PC-3 (cell line): ENCODE measurements at regions of chr12 and their contacts with region 1.

Region 1: DNA sequence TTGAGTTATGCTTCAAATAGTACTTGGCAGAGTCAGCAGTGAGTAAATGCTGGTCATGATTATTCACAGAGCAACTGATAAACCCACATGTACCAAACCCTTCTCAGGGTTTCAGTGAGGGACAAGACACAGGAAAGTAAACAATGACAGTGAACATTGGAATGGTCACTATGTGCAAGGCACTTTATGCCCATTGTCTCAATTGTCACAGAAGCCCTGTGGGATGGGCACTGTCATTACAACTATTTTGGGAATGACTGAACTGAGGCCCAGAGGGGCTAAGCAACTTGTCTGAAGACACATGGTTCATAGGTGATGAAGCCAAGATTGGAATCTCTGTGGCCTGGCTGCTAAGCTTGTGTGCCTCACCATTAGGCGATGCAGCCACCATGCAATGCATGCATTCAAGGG is 238.5 kb downstream of the RBM19 start:
- DNase-seq: peak; percentile 99
- ATAC-seq: peak; percentile 90
- H3K4me3 ChIP-seq: no peak overlapping the region
- H3K27ac ChIP-seq: peak overlapping the region; percentile 80
- H3K4me1 ChIP-seq: peaks cover 34% of the 10 kb centered on the region
- H3K27me3 ChIP-seq: no peaks in the 10 kb centered on the region
- CTCF ChIP-seq: no peak

Region 2: DNA sequence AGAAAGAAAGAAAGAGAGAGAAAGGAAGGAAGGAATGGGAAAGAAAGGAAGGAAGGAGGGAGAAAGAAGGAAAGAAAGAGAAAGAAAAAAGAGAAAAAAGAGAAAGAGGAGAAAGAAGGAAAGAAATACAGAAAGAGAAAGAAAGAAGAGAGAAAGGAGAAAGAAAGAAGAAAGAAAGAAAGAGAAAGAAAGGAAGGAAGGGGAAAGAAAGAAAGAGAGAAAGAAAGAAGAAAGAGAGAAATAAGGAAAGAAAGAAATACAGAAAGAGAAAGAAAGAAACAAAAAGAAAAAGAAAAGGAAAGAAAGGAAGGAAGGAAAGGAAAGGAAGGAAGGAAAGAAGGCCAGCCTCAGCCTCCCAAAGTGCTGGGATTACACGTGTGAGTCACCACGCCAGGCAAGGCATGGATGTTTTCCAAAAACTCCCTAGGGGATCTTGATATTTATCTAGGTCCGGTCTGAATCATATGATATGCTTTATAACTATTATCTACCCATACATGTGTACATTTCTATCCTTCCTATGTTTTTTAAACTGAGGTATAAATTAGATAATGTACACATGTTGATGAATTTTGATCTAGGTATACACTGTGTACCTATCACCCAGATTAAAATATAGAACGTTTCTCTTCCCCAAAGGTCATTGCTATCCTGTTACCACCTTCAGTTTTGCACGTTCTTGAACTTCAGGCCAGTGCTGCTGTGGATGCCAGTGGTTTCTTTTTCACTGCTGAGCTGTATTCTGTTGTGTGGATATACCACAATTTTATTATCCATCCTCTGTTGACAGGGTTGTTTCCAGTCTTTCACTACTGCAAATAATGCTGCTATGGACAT is 60.6 kb after region 1 on chr12:
- CTCF ChIA-PET with region 1: no interaction called
- POLR2A ChIA-PET with region 1: no interaction called
- intact Hi-C with region 1: loop called (anchors 2 kb)
- DNase-seq: peak; percentile 96
- ATAC-seq: peak; percentile 74
- H3K4me3 ChIP-seq: no peak overlapping the region
- H3K27ac ChIP-seq: peak overlapping the region; percentile 23
- H3K4me1 ChIP-seq: peaks cover 30% of the 10 kb centered on the region
- H3K27me3 ChIP-seq: no peaks in the 10 kb centered on the region
- CTCF ChIP-seq: no peak

Region 3: DNA sequence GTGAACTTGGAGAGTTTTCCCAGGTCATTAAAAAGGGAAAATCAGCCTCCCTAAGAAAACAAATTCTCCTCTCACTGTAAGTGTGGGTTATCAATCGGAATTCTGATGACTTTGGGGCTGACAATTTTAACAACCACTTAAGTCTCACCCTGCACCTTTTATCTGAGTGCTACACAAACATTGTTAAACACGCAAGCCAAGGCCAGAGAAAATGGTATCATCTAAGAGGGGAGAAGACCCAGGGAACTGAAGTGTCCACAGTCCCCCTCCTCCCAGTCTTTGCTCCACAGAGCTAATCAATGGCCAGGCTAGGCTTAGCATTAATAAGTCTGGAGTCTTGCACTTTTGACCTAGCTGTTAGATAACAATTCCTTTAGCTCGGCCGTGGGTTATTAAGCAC is 730.0 kb after region 1 on chr12:
- CTCF ChIA-PET with region 1: no interaction called
- POLR2A ChIA-PET with region 1: no interaction called
- intact Hi-C with region 1: no loop called
- DNase-seq: no peak
- ATAC-seq: no peak
- H3K4me3 ChIP-seq: no peak overlapping the region
- H3K27ac ChIP-seq: no peak overlapping the region
- H3K4me1 ChIP-seq: no peaks in the 10 kb centered on the region
- H3K27me3 ChIP-seq: peaks cover 58% of the 10 kb centered on the region
- CTCF ChIP-seq: no peak